ENCODE measurements at regions of chr10 and their contacts with region 1.

Region 1: GRCh38 chr10:50567384-50567783 is 56.4 kb downstream of the SGMS1 start:
- DNase-seq: no peak
- H3K4me3 ChIP-seq: no peak overlapping the region
- H3K27ac ChIP-seq: no peak overlapping the region
- H3K4me1 ChIP-seq: peaks cover 0 to 7% (median 1%) of the 10 kb centered on the region in 4 donors
- H3K27me3 ChIP-seq: no peaks in the 10 kb centered on the region
- CTCF ChIP-seq: no peak

Region 2: GRCh38 chr10:50527442-50528043 is 39.8 kb before region 1 on chr10:
- intact Hi-C with region 1: no loop called
- DNase-seq: no peak
- H3K4me3 ChIP-seq: no peak overlapping the region
- H3K27ac ChIP-seq: no peak overlapping the region
- H3K4me1 ChIP-seq: no peaks in the 10 kb centered on the region
- H3K27me3 ChIP-seq: no peaks in the 10 kb centered on the region
- CTCF ChIP-seq: no peak

Region 3: DNA sequence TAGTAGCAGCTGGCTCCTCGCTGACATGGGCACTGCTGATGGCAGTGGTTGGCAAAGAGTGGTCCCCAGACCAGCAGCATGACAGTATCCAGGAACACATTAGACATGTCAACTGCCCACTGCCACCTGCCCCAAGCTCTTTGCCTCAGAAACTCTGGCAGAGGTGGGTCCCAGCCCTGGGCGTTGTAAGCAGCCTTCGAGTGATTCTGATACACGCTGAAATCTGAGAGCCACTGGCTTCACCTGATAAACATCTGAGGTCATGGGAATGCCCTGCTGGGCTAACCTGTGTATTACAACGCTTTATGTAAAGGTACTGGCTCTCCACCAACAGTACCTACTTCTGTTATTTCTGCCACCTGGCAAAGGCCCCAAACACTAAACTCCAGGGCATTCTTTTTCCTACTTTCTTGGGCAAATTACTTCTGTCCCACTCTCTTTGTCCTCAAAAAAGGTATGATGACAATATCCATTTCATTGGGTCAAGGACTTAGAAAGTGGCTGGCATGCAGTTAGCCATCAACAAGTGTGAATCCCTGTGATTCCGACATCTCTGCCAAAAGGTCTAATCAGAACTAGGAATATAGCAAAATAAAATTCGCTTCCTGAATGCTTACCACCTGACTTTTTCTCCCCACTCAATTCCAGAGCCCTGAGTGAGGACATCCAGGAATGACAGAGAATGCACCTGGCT is 47.2 kb after region 1 on chr10:
- intact Hi-C with region 1: loop called (anchors 5 kb)
- DNase-seq: no peak
- H3K4me3 ChIP-seq: no peak overlapping the region
- H3K27ac ChIP-seq: no peak overlapping the region
- H3K4me1 ChIP-seq: peaks cover 0 to 24% (median 5%) of the 10 kb centered on the region in 4 donors
- H3K27me3 ChIP-seq: no peaks in the 10 kb centered on the region
- CTCF ChIP-seq: no peak

Region 4: GRCh38 chr10:51357170-51357569 is 789.8 kb after region 1 on chr10:
- intact Hi-C with region 1: no loop called
- DNase-seq: no peak
- H3K4me3 ChIP-seq: no peak overlapping the region
- H3K27ac ChIP-seq: no peak overlapping the region
- H3K4me1 ChIP-seq: peaks cover 0 to 32% (median 2%) of the 10 kb centered on the region in 4 donors
- H3K27me3 ChIP-seq: no peaks in the 10 kb centered on the region
- CTCF ChIP-seq: no peak

Measured in tibial artery (tissue), 4 donors.